GM10248 (cell line): ENCODE measurements at regions of chr15 and their contacts with region 1.

Region 1: DNA sequence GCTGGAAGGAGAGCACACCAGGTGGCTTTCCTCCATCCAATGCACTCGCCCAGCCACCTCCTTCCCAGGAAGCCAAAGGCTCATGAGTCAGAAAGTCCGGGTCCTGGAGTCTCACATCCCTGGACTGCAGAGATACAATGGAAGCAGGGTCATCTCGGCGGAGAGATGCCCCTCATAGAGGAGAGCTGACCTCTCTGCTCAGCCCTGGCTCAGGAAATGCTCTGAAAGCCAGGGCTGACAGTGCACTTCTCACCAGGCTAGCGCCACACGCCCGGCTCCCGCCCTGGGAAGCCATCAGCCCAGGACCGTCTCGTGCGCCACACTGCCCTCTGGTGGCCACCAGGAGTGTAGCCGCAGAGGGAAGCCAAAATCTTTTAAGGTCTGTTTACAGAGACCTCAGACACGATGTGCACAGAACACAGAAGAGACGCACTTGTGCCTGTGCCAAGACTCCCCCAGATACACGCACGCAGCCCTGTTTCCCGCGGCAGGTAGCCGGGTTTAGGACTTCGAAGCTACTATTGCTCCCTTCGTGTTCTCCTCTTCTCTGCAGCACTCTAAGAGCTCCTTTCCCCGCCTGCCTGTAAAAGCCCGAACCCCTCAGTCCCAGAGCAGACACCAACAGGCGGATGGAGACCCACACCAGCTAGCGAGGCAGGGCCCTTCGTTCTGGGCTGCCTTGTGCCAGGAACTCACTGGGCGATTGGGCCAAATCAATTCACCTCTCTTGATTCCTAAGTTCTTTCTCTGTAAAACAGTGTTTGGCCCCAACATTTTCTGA is 9.7 kb downstream of the NTRK3 start:
- DNase-seq: peak; percentile 82
- CTCF ChIP-seq: peak; percentile 97

Region 2: DNA sequence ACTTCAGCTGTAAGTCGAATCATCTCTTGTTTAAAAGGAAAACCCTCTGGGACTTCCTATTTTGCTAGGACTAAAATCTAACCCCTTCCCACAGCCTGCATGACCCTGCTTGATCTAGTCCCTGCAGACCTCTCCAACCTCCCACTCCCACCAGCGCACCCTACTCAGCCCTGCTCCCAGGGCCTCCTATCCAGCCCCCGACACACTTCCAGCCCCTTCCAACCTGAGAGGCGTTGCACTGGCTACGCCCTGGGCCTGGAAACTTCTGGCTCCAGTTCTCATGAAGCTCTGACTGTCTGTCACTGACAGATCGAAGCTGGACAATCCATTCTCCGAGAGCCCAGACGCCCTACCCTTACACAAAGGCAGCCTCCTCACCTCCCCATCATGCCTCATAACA is 12.1 kb before region 1 on chr15:
- CTCF ChIA-PET with region 1: interaction called, 17 read pairs
- POLR2A ChIA-PET with region 1: no interaction called
- DNase-seq: no peak
- CTCF ChIP-seq: no peak

Region 3: GRCh38 chr15:88258093-88258641 is 11.3 kb after region 1 on chr15:
- CTCF ChIA-PET with region 1: interaction called, 63 read pairs
- POLR2A ChIA-PET with region 1: no interaction called
- DNase-seq: no peak
- CTCF ChIP-seq: peak; percentile 6

Region 4: GRCh38 chr15:88274553-88275460 is 28.0 kb after region 1 on chr15:
- CTCF ChIA-PET with region 1: interaction called, 98 read pairs
- POLR2A ChIA-PET with region 1: no interaction called
- DNase-seq: peak; percentile 80
- CTCF ChIP-seq: peak; percentile 83